ENCODE measurements at regions of chr6 and their contacts with region 1.

Region 1: DNA sequence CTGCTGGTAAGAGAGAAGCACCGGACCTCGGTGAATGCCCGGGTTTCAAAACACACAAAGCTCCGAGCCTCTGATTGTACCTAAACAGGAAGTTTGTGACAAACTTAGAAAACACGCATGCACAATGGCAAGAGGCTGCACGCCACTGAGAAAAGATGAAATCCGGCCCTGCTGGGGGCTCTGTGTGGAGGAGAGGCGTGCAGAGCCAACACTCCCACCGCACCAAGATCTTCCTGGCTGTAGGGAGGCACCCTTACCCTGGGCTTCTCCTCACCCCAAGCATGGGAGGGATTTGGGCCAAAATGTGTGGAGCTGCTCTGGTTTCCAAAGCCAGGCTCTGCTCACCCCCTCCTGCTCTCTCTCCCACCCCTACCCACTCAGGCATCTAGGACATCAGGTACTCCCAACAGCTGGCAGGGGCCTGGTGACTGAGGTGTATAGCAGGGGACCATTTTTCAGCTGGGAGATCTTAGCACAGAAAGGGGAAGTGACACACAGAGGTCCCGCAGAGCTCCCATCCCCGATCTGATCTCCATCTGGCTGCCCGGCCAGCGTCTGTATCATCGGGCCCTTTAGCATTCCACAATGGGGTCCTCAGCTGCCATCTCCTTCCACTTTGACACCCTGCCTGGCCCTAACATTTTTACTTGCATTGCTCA is 84.2 kb downstream of the TRERF1 start:
- DNase-seq: peak; percentile 47
- H3K4me3 Mint-ChIP-seq: peak overlapping the region; percentile 45
- H3K27ac Mint-ChIP-seq: peak overlapping the region; percentile 90
- H3K4me1 Mint-ChIP-seq: peaks cover 67% of the 10 kb centered on the region
- H3K27me3 Mint-ChIP-seq: no peaks in the 10 kb centered on the region

Region 2: GRCh38 chr6:42352856-42353564 is 14.5 kb before region 1 on chr6:
- CTCF ChIA-PET with region 1: interaction called, 9 read pairs
- POLR2A ChIA-PET with region 1: interaction called, 11 read pairs
- DNase-seq: no peak
- H3K4me3 Mint-ChIP-seq: no peak overlapping the region
- H3K27ac Mint-ChIP-seq: no peak overlapping the region
- H3K4me1 Mint-ChIP-seq: peaks cover 8% of the 10 kb centered on the region
- H3K27me3 Mint-ChIP-seq: no peaks in the 10 kb centered on the region

Measured in activated CD4-positive, alpha-beta T cell treated with anti-CD3 and anti-CD28 coated beads, Interleukin-2, amount 10 ng/mL, durations not matched to agents 7 days and 5 days (primary cell).